ENCODE measurements at regions of chr1 and their contacts with region 1.

Region 1: DNA sequence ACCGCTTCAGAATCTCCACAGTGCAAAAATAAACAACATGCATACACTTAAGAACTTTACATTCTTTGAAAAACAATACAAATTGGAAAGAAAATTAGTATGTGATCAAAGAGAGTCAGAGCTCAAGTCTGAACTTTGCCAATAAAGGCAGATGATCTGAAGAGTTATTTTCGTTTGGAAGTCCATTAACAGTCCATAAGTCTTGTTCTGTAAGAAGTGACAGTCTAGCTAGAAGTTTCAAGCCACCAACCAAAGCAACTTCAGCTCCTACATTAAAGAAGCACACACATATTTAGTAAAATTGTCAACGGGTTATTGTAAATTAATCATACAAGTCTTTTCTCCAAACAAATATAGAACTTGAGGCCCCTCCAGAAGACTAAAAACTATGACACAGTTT is 20.7 kb downstream of the ANGEL2 start:
- DNase-seq: no peak
- H3K4me3 ChIP-seq: no peak overlapping the region
- H3K4me3 Mint-ChIP-seq: no peak overlapping the region
- H3K27ac Mint-ChIP-seq: no peak overlapping the region
- H3K4me1 ChIP-seq: no peaks in the 10 kb centered on the region
- H3K4me1 Mint-ChIP-seq: no peaks in the 10 kb centered on the region
- H3K27me3 ChIP-seq: no peaks in the 10 kb centered on the region
- H3K27me3 Mint-ChIP-seq: no peaks in the 10 kb centered on the region
- CTCF ChIP-seq: no peak

Region 2: DNA sequence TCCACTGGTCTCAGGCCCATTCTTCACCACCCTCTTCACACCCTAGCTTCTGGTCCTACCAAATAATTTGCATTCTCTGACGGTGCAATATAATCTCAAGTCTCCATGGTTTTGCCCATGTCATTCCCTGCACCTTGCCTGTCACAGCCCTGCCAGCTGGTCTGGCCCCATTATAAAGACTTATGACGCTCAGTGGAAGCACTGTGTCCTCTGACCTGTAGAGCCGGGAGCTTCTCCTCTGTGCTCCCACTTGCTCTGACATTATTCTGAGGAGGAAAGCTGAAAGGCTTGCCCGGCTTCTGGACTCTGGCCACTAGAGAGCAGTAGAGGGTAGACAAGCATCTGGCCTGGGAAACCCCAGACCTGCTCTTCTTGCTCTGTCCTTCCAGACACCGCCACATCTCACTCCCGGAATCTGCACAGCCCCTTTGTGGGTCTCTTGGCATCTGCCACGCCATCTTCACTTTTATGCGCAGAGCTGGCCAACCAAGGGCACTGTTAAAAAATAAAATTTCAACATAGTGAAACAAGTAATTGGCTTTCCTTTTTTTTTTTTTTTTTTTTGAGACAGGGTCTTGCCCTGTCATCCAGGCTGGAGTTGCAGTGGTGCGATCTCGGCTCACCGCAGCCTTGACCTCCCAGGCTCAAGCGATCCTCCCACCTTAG is 517.8 kb before region 1 on chr1:
- CTCF ChIA-PET with region 1: no interaction called
- POLR2A ChIA-PET with region 1: no interaction called
- intact Hi-C with region 1: loop called (anchors 5 kb)
- DNase-seq: peak; percentile 88 to 91
- H3K4me3 ChIP-seq: no peak overlapping the region
- H3K4me3 Mint-ChIP-seq: no peak overlapping the region
- H3K27ac Mint-ChIP-seq: no peak overlapping the region
- H3K4me1 ChIP-seq: peaks cover 5% of the 10 kb centered on the region
- H3K4me1 Mint-ChIP-seq: peaks cover 7% of the 10 kb centered on the region
- H3K27me3 ChIP-seq: no peaks in the 10 kb centered on the region
- H3K27me3 Mint-ChIP-seq: no peaks in the 10 kb centered on the region
- CTCF ChIP-seq: peak; percentile 94 to 95

Region 3: DNA sequence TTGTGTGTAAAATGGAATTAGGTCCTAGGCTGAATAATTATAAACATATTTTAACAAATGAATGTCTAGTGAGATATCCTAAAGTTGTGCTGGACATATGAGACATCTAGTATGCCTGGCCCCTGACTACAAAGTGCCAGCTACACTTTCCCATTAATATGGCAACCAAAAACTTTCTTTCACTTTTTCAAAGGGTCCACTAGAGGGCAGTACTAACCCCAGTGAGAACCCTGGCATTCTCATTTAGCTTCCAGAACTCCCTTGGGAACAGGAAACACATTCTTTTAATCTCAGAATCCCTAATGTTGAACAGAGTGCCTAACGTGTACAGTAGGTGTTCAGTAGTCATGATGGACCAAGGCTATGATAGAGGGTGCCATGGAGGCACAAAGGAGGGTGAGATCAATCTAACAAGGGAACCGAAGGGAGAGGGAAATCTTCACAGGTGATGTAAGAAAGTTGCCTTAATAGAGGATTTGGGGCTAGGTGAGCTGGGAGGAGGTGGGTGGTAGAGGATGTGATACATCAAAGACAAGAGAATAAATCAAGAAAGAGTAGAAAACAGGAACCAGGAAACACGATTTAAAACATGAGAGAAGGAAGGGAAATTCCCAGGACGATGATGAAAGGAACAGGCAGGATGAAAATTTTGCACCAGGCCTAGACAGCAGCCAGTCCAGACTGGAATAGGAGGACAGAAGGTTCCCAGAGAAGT is 244.9 kb before region 1 on chr1:
- CTCF ChIA-PET with region 1: interaction called, 6 read pairs
- POLR2A ChIA-PET with region 1: no interaction called
- intact Hi-C with region 1: loop called (anchors 1 kb)
- DNase-seq: peak in 1 of 2 experiments; percentile 47
- H3K4me3 ChIP-seq: no peak overlapping the region
- H3K4me3 Mint-ChIP-seq: no peak overlapping the region
- H3K27ac Mint-ChIP-seq: peak overlapping the region; percentile 3
- H3K4me1 ChIP-seq: no peaks in the 10 kb centered on the region
- H3K4me1 Mint-ChIP-seq: peaks cover 8% of the 10 kb centered on the region
- H3K27me3 ChIP-seq: no peaks in the 10 kb centered on the region
- H3K27me3 Mint-ChIP-seq: no peaks in the 10 kb centered on the region
- CTCF ChIP-seq: peak; percentile 77 to 80

Region 4: DNA sequence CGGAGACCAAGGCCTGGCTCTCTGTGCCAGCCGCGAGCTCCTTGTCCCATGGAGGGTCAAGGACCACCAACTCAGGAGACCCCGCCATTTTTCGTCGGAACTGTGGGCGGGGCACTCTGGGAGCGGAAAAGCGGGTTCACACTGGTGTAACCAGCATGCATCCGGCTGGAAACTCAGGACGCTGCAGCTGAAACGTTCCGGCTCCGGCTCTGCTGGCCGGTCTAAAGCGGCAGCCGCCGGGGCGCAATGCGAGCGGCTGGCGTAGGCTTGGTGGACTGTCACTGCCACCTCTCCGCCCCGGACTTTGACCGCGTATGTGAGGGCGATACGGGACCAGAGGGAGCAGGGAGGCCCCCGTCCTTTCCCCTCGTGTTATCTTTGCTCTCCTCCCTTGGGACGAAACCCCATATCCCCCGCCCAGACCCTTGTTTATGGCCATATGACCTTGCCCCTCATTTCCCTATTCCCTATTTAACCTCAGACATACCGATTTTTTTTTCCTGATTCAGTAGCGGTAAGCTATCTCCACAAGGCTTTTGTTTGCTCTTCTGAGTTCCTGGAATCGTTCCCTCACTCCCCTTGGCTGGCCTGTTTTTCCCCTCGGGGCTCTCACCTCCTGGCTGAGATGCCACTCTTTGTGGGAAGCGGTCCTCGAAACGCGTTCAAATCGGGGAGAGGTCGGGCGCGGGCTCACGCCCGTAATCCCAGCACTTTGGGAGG is 203.1 kb before region 1 on chr1 and contains the starts of genes NSL1 and TATDN3:
- CTCF ChIA-PET with region 1: no interaction called
- POLR2A ChIA-PET with region 1: no interaction called
- intact Hi-C with region 1: loop called (anchors 1 kb)
- DNase-seq: peak; percentile 97 to 99
- H3K4me3 ChIP-seq: peak within 1 kb of the TSS; percentile 88
- H3K4me3 Mint-ChIP-seq: peak within 1 kb of the TSS; percentile 94
- H3K27ac Mint-ChIP-seq: peak within 1 kb of the TSS; percentile 97
- H3K4me1 ChIP-seq: peaks cover 16% of the 10 kb centered on the region
- H3K4me1 Mint-ChIP-seq: peaks cover 25% of the 10 kb centered on the region
- H3K27me3 ChIP-seq: no peaks in the 10 kb centered on the region
- H3K27me3 Mint-ChIP-seq: no peaks in the 10 kb centered on the region
- CTCF ChIP-seq: no peak
- total RNA-seq, gene NSL1: 35.9 and 45.6 TPM in 2 replicates
- total RNA-seq, gene TATDN3: 9.6 and 12.4 TPM in 2 replicates

Region 5: GRCh38 chr1:212915245-212916091 is 79.5 kb before region 1 on chr1:
- CTCF ChIA-PET with region 1: interaction called, 3 read pairs
- POLR2A ChIA-PET with region 1: no interaction called
- intact Hi-C with region 1: loop called (anchors 5 kb)
- DNase-seq: peak in 1 of 2 experiments; percentile 38
- H3K4me3 ChIP-seq: no peak overlapping the region
- H3K4me3 Mint-ChIP-seq: no peak overlapping the region
- H3K27ac Mint-ChIP-seq: no peak overlapping the region
- H3K4me1 ChIP-seq: no peaks in the 10 kb centered on the region
- H3K4me1 Mint-ChIP-seq: peaks cover 15% of the 10 kb centered on the region
- H3K27me3 ChIP-seq: no peaks in the 10 kb centered on the region
- H3K27me3 Mint-ChIP-seq: no peaks in the 10 kb centered on the region
- CTCF ChIP-seq: peak; percentile 42 to 54

Measured in Caco-2 (cell line).